ENCODE measurements at regions of chr11 and their contacts with region 1.

Region 1: GRCh38 chr11:110429731-110430266 is at the start of gene FDX1:
- DNase-seq: peak; percentile 86
- ATAC-seq: peak; percentile 90
- H3K4me3 Mint-ChIP-seq: peak within 1 kb of the TSS; percentile 99
- H3K27ac Mint-ChIP-seq: peak within 1 kb of the TSS; percentile 97
- H3K4me1 Mint-ChIP-seq: peaks cover 39% of the 10 kb centered on the region
- H3K27me3 Mint-ChIP-seq: no peaks in the 10 kb centered on the region
- total RNA-seq, gene FDX1: 11.2 to 19.0 TPM

Region 2: DNA sequence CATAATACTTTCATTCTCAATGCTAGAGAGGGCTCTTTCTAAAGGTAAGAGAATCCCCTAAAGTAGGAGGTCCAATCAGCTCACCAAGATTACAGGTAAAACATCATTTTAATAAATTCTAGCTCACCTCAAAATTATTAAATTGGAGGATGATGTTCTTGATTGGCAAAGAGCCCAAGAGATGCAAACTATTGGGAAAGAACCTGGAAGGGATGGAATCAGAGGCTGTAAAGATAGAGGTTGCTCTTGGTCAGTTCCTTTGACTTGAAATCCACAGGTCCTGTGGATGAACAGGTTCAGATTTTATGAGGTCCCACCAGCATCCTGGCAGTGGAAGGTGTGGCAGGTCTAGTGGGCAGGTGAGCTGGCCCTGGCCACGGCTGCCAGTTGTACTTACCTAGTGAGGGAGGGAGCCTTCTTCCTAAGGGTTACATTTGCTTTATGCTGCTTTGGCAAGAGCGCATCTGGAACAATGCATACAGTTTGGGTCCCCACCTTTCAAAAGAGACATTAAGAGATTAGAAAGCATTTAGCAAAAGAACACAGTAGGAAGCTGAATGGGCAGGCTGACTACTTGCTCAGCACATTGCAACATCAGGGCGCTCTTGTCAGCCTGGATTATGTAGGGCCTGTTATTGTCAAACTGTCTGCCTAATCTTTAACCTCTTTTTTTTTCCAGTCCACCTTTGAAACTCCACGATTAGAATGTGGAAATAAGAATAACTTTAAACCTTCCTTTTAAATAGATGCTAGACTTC is 230.4 kb before region 1 on chr11:
- CTCF ChIA-PET with region 1: interaction called, 80 read pairs
- DNase-seq: no peak
- ATAC-seq: no peak
- H3K4me3 Mint-ChIP-seq: no peak overlapping the region
- H3K27ac Mint-ChIP-seq: no peak overlapping the region
- H3K4me1 Mint-ChIP-seq: peaks cover 2% of the 10 kb centered on the region
- H3K27me3 Mint-ChIP-seq: peaks cover 4% of the 10 kb centered on the region

Region 3: GRCh38 chr11:110296226-110297075 is 133.3 kb before region 1 on chr11 and contains the start of gene RDX:
- CTCF ChIA-PET with region 1: interaction called, 10 read pairs
- DNase-seq: peak; percentile 71
- ATAC-seq: peak; percentile 76
- H3K4me3 Mint-ChIP-seq: peak within 1 kb of the TSS; percentile 92
- H3K27ac Mint-ChIP-seq: peak within 1 kb of the TSS; percentile 81
- H3K4me1 Mint-ChIP-seq: peaks cover 37% of the 10 kb centered on the region
- H3K27me3 Mint-ChIP-seq: no peaks in the 10 kb centered on the region
- total RNA-seq, gene RDX: 53.9 to 71.3 TPM

Region 4: DNA sequence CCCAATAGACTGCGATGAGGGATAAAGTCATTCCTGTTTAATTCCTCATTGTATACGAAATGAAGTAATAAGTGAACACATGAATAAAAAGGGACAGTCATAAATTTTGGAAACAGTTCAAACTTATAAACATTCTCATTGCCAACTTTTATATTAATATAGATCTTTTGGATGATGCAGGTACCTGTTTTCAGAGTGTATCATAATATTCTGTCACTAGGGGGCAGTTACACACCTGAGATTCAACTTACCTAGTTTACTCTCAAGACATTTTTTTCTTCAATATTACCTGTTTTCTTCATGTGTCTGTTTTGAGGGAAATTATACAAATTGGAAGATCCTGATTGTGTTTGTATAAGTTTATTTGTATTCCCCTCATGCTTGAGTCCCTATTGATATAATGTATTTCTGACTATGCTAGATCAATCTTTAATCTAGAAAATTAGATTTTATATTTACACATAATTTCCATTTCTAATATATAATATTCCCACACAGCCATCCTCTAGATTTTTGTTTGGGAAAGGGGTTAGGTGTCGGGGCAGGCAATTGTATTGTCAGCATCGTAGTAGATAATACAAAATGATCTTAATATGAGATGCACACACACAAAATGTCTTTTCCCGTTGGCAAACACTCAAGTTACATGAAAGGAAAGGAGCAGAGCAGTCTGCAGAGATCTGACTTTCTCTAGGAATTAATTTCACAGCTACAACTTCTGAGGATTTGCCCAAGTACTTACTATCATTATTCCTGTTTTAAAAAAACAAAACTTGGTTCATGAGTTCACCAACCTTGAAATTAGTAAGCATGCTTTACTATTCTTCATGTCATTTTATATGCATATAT is 18.3 kb after region 1 on chr11:
- CTCF ChIA-PET with region 1: interaction called, 24 read pairs
- DNase-seq: no peak
- ATAC-seq: no peak
- H3K4me3 Mint-ChIP-seq: no peak overlapping the region
- H3K27ac Mint-ChIP-seq: no peak overlapping the region
- H3K4me1 Mint-ChIP-seq: peaks cover 32% of the 10 kb centered on the region
- H3K27me3 Mint-ChIP-seq: no peaks in the 10 kb centered on the region

Region 5: GRCh38 chr11:110453684-110454354 is 24.0 kb after region 1 on chr11:
- CTCF ChIA-PET with region 1: interaction called, 12 read pairs
- DNase-seq: no peak
- ATAC-seq: peak; percentile 67
- H3K4me3 Mint-ChIP-seq: peak overlapping the region; percentile 43
- H3K27ac Mint-ChIP-seq: peak overlapping the region; percentile 85
- H3K4me1 Mint-ChIP-seq: peaks cover 58% of the 10 kb centered on the region
- H3K27me3 Mint-ChIP-seq: no peaks in the 10 kb centered on the region

Region 6: DNA sequence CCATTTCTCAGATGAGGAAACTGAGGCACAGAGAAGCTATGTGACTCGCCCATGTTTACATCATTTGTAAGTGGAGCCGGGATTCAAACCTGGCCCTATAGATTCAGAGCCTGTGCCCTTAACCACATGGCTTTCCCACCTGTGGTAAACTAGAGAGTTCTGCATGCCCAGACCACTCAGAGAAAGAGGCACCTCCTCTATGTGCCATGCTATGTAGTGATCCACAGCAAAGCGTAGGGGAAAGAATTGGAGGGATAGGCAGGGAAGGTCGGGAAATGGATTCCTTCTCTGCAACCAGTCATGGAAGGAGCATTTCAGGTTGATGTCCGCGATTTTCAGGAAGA is 800.3 kb after region 1 on chr11:
- CTCF ChIA-PET with region 1: interaction called, 34 read pairs
- DNase-seq: no peak
- ATAC-seq: peak; percentile 59
- H3K4me3 Mint-ChIP-seq: peak overlapping the region; percentile 75
- H3K27ac Mint-ChIP-seq: no peak overlapping the region
- H3K4me1 Mint-ChIP-seq: peaks cover 29% of the 10 kb centered on the region
- H3K27me3 Mint-ChIP-seq: peaks cover 31% of the 10 kb centered on the region

Measured in activated CD8-positive, alpha-beta memory T cell treated with anti-CD3 and anti-CD28 coated beads, Interleukin-2, amount 10 ng/mL, durations not matched to agents 7 days and 5 days (primary cell).